ENCODE measurements at regions of chr1 and their contacts with region 1.

Region 1: DNA sequence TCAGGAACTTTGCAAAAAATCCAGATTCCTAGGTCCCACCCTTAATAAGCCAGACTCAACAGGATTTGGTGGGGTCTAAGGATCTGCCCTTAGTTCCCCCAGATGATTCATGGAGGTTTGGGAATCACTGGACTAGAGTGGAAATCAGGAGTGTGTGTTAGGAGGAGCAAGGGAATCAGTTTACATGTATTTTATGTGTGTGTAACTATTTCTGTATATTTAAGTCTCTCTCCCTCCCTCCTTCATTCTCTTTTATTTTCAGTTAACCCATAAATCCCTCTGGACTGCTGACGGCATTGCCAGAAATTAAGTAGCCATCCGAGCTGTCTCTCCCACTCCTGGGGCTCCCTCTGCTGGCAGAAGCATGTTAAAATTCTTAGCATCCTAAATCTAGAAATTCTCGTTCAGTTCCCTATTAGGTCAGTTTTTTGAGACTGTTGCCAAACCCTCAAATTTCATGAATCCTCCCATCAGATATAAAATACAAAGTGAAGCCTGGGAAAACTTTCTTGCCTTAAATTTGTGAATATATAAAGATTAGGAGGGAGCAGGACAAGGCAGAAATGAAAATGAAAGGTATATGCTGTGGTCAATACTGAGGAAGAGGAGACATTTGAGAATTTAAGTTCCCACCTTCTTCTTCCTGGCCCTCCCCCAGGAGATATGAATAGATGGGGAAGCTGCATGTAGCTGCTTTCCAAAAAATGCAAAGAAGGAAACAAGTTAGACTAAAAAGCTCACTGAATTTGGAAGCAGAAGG is 11.7 kb upstream of the HSD11B1 start:
- DNase-seq: peak; percentile 69 to 78 (median 70)
- H3K4me3 ChIP-seq: no peak overlapping the region
- H3K27ac ChIP-seq: no peak overlapping the region
- H3K4me1 ChIP-seq: no peaks in the 10 kb centered on the region
- H3K27me3 ChIP-seq: peaks cover 2 to 10% (median 5%) of the 10 kb centered on the region in 5 experiments

Region 2: GRCh38 chr1:209565759-209566678 is 126.9 kb before region 1 on chr1:
- CTCF ChIA-PET with region 1: interaction called, 15 read pairs
- POLR2A ChIA-PET with region 1: no interaction called
- DNase-seq: peak; percentile 78 to 88 (median 83)
- H3K4me3 ChIP-seq: no peak overlapping the region
- H3K27ac ChIP-seq: no peak overlapping the region
- H3K4me1 ChIP-seq: no peaks in the 10 kb centered on the region
- H3K27me3 ChIP-seq: peaks cover 0 to 18% (median 8%) of the 10 kb centered on the region in 5 experiments

Region 3: DNA sequence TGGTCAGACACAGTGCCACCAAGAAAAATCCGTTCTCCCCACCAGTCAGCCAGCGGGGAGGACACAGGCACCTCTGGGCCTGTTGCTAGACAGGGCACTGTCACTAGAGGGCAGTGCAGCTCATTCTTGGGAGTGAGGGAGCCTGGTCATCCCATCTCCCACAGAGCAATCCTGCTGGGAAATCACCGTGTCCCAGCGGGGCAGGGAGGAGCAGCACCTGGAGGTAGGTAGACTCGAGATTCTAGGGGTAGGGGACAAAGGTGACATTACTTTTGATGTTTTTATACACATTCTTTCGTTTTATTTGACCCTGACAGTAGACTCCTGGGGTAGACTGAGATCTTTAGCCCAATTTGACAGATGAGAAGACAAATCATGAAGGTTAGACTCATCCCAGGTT is 116.1 kb before region 1 on chr1:
- CTCF ChIA-PET with region 1: interaction called, 24 read pairs
- POLR2A ChIA-PET with region 1: no interaction called
- DNase-seq: peak; percentile 30 to 51 (median 49)
- H3K4me3 ChIP-seq: no peak overlapping the region
- H3K27ac ChIP-seq: no peak overlapping the region
- H3K4me1 ChIP-seq: no peaks in the 10 kb centered on the region
- H3K27me3 ChIP-seq: peaks cover 4 to 20% (median 6%) of the 10 kb centered on the region in 5 experiments

Region 4: GRCh38 chr1:209601809-209602657 is 90.9 kb before region 1 on chr1:
- CTCF ChIA-PET with region 1: interaction called, 26 read pairs
- POLR2A ChIA-PET with region 1: no interaction called
- DNase-seq: peak; percentile 50 to 68 (median 67)
- H3K4me3 ChIP-seq: no peak overlapping the region
- H3K27ac ChIP-seq: no peak overlapping the region
- H3K4me1 ChIP-seq: no peaks in the 10 kb centered on the region
- H3K27me3 ChIP-seq: peaks cover 2 to 8% (median 4%) of the 10 kb centered on the region in 5 experiments

Region 5: DNA sequence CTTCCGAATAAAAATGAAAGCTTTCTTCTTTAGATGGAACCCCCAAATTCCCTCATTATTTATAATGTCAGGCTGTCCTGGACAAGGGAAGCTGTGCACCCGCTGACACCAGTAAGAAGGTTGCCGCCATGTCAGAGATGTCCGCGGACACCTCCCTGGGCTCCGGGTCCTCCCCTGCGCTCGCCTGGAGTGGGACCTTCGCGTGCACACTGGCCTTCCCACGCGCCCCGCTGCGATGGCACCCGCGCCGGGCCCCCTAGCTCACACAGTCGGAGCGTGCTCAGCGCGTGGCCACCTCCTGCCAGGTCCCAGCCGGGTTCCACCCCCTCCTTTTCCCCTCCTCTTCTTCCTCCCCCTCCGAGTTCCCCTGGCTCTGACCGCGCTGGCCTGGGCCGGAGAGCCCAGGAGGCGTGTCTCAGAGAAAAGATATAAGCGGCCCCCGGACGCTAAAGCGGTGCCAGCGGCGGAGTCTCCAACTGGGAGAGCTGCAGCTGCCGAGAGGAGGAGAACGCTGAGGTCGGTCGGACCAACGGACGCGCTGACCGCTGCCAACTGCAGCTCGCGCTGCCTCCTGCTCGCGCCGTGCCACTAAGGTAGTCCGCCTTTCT is 17.9 kb before region 1 on chr1 and contains the start of gene G0S2:
- CTCF ChIA-PET with region 1: interaction called, 14 read pairs
- POLR2A ChIA-PET with region 1: no interaction called
- DNase-seq: peak in 2 of 3 donors; percentile 37 to 51
- H3K4me3 ChIP-seq: peak within 1 kb of the TSS in 6 of 7 experiments; percentile 21 to 66 (median 65)
- H3K27ac ChIP-seq: no peak within 1 kb of the TSS
- H3K4me1 ChIP-seq: peaks cover 10 to 25% (median 18%) of the 10 kb centered on the region in 4 experiments
- H3K27me3 ChIP-seq: peaks cover 6 to 85% (median 49%) of the 10 kb centered on the region in 5 experiments

Region 6: GRCh38 chr1:209768354-209768774 is 75.4 kb after region 1 on chr1:
- CTCF ChIA-PET with region 1: no interaction called
- POLR2A ChIA-PET with region 1: no interaction called
- DNase-seq: peak in 2 of 3 donors; percentile 56 to 63
- H3K4me3 ChIP-seq: peak overlapping the region in 6 of 7 experiments; percentile 9 to 68 (median 46)
- H3K27ac ChIP-seq: peak overlapping the region; percentile 48 to 87
- H3K4me1 ChIP-seq: peaks cover 26 to 67% (median 53%) of the 10 kb centered on the region in 4 experiments
- H3K27me3 ChIP-seq: no peaks in the 10 kb centered on the region

Region 7: GRCh38 chr1:210001751-210002150 is 308.8 kb after region 1 on chr1:
- CTCF ChIA-PET with region 1: no interaction called
- POLR2A ChIA-PET with region 1: no interaction called
- DNase-seq: no peak
- H3K4me3 ChIP-seq: no peak overlapping the region
- H3K27ac ChIP-seq: no peak overlapping the region
- H3K4me1 ChIP-seq: no peaks in the 10 kb centered on the region
- H3K27me3 ChIP-seq: peaks cover 0 to 9% (median 5%) of the 10 kb centered on the region in 5 experiments

Measured in common myeloid progenitor, CD34-positive (primary cell).